MCF 10A (cell line): ENCODE measurements at regions of chr2 and their contacts with region 1.

Region 1: DNA sequence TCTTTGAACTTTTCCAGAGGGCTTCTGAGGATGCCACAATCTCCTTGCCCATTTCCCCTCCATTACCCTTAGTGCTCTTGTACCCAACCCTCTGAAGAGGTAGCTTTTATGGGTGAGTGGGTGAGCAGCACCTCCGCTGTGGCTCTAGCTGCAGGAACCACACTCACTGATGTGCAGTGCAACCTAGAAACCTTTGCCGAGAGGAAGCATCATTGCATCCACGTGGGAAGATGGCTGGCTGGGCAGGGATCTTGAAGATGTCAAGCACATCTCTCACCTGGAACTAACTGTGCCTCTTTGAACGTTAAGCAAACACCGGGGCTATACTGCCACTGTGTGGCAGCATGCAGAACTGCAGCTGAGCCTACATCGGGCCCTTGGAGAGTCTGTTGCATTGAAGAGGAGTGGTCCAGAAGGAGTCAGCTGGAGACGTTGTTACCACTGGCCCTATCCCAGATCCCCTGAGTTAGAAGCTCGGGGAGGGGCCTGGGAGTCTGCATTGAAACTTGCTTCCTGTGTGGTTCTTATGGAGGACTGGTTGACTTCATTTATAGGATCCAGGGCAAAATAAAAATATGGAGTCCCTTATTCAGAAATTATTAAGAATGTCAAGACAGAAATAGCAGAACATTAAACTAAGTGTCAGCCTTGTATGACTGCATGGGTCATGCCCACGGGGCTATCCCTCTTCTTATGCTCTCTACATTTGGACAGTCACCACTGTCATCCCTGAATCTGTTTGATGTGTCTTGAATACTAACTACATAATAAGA is 28.7 kb downstream of the IGFBP5 start:
- DNase-seq: peak; percentile 79
- H3K4me3 Mint-ChIP-seq: no peak overlapping the region
- H3K27ac Mint-ChIP-seq: no peak overlapping the region
- H3K4me1 Mint-ChIP-seq: peaks cover 15% of the 10 kb centered on the region
- H3K27me3 Mint-ChIP-seq: peaks cover 19% of the 10 kb centered on the region
- CTCF ChIP-seq: peak; percentile 97

Region 2: GRCh38 chr2:216222650-216223352 is 443.8 kb before region 1 on chr2:
- CTCF ChIA-PET with region 1: interaction called, 5 read pairs
- POLR2A ChIA-PET with region 1: no interaction called
- intact Hi-C with region 1: loop called (anchors 5 kb)
- DNase-seq: peak; percentile 30
- H3K4me3 Mint-ChIP-seq: no peak overlapping the region
- H3K27ac Mint-ChIP-seq: no peak overlapping the region
- H3K4me1 Mint-ChIP-seq: peaks cover 31% of the 10 kb centered on the region
- H3K27me3 Mint-ChIP-seq: no peaks in the 10 kb centered on the region
- CTCF ChIP-seq: peak; percentile 31

Region 3: DNA sequence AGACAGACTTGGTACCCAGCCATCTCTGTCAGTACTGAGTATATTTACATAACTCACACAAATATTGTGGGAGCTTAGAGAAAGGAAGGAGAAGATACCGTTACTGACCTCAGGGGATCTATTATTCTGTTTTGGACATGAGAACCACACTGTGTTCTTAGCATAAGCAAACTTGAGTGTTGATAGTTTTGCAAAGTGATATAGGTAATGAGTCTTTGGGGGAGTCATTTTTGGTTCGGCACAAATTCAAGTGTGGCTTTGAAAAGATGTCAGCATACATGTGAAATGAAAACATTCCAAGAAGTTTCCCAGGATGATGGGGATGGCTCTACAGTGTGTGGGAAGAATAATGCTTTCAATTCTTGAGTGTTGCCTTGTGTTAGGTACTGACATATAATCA is 230.3 kb before region 1 on chr2:
- CTCF ChIA-PET with region 1: no interaction called
- POLR2A ChIA-PET with region 1: no interaction called
- intact Hi-C with region 1: no loop called
- DNase-seq: no peak
- H3K4me3 Mint-ChIP-seq: no peak overlapping the region
- H3K27ac Mint-ChIP-seq: no peak overlapping the region
- H3K4me1 Mint-ChIP-seq: no peaks in the 10 kb centered on the region
- H3K27me3 Mint-ChIP-seq: no peaks in the 10 kb centered on the region
- CTCF ChIP-seq: no peak

Region 4: DNA sequence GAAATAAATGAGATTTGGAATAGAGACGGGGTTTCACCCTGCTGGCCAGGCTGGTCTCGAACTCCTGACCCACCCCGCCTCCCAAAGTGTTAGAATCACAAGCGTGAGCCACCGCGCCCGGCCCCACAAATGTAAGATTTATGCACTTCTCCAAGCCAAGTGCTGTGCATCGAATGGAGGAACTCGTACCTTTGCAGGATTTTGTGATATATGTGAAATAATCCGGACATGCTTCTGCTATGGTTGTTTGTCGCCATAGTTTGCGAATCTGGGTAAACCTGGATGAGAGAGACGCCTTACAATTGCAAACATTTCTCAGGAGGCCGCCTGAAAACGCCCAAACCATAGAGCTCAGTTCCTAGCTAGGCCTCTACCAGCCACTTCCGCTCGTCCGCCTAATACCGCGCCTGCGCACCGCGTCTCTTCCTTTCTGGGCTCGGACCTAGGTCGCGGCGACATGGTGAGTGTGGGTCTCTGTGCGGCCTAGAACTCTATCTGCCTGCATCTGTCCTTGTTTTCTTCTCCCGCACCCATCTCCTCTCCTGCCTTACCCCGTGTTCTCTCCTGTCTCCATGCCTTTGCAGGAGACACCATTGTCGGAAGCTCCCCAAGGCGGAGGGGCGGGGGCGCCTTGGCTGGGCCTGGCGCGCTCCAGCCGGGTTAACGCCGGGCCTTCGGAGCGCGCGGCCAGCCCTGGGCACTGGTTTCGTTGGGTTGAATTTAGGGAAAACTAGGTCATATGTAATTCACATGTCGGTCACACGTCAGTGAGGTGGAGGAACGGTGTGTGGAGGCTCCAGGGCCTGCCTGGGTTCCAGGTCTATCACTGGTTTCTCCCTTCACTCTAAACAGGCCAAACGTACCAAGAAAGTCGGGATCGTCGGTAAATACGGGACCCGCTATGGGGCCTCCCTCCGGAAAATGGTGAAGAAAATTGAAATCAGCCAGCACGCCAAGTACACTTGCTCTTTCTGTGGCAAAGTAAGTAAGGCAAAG is 167.9 kb before region 1 on chr2 and contains the start of gene RPL37A:
- CTCF ChIA-PET with region 1: interaction called, 4 read pairs
- POLR2A ChIA-PET with region 1: interaction called, 10 read pairs
- intact Hi-C with region 1: no loop called
- DNase-seq: peak; percentile 97
- H3K4me3 Mint-ChIP-seq: peak within 1 kb of the TSS; percentile 97
- H3K27ac Mint-ChIP-seq: peak within 1 kb of the TSS; percentile 99
- H3K4me1 Mint-ChIP-seq: peaks cover 28% of the 10 kb centered on the region
- H3K27me3 Mint-ChIP-seq: no peaks in the 10 kb centered on the region
- CTCF ChIP-seq: no peak
- total RNA-seq, gene RPL37A: 4,349 and 4,745 TPM in 2 replicates

Region 5: DNA sequence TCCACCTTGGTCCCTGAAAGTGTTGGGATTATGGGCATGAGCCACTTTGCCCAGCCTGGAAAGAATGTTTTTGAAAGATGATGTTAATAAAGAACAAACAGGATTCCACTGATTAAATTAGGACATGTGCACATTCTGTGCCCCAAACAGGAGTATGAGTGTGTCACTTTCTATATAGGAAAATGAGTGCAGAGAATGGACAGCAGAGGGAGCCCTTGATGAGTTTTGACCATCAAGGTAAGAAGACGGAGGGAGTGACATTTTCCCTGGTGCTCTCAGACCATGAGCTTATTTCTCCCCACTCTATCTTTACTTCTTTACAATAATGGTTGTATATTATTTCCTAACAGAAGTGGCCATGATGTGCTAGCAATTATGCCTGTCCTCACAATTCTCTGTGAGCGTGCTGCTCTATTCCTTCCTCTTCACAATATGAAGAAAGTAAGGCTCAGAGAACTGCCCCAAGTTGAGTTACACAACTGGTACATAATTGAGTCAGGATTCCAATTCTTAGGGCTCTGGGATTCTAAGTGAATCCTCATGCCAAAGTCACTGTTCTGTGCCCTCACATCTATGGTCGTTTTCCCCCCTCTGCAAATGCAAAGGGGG is 147.4 kb before region 1 on chr2:
- CTCF ChIA-PET with region 1: interaction called, 673 read pairs
- POLR2A ChIA-PET with region 1: interaction called, 34 read pairs
- intact Hi-C with region 1: loop called (anchors 1 kb)
- DNase-seq: peak; percentile 82
- H3K4me3 Mint-ChIP-seq: no peak overlapping the region
- H3K27ac Mint-ChIP-seq: no peak overlapping the region
- H3K4me1 Mint-ChIP-seq: peaks cover 6% of the 10 kb centered on the region
- H3K27me3 Mint-ChIP-seq: no peaks in the 10 kb centered on the region
- CTCF ChIP-seq: peak; percentile 62

Region 6: DNA sequence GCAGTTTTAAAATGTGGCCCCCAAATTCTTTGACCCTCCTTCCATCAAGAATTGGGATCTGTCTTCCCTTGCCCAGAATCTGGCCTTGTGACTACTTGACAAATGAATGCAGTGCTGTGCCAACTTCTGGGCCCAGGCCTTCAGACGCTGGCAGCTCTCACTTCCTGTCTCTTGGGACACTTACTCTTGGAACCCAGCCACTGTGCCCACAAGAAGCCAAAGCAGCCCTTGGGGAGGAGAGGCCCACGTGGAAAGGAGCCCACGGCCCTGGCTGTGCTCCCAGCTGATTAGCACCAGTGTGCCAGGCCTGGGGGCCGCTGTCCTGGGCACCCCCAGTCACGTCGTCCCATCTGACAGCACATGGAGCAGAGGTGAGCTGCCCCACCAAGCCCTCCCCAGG is 111.4 kb before region 1 on chr2:
- CTCF ChIA-PET with region 1: interaction called, 13 read pairs
- POLR2A ChIA-PET with region 1: interaction called, 11 read pairs
- intact Hi-C with region 1: no loop called
- DNase-seq: peak; percentile 92
- H3K4me3 Mint-ChIP-seq: peak overlapping the region; percentile 24
- H3K27ac Mint-ChIP-seq: peak overlapping the region; percentile 94
- H3K4me1 Mint-ChIP-seq: peaks cover 34% of the 10 kb centered on the region
- H3K27me3 Mint-ChIP-seq: no peaks in the 10 kb centered on the region
- CTCF ChIP-seq: no peak

Region 7: DNA sequence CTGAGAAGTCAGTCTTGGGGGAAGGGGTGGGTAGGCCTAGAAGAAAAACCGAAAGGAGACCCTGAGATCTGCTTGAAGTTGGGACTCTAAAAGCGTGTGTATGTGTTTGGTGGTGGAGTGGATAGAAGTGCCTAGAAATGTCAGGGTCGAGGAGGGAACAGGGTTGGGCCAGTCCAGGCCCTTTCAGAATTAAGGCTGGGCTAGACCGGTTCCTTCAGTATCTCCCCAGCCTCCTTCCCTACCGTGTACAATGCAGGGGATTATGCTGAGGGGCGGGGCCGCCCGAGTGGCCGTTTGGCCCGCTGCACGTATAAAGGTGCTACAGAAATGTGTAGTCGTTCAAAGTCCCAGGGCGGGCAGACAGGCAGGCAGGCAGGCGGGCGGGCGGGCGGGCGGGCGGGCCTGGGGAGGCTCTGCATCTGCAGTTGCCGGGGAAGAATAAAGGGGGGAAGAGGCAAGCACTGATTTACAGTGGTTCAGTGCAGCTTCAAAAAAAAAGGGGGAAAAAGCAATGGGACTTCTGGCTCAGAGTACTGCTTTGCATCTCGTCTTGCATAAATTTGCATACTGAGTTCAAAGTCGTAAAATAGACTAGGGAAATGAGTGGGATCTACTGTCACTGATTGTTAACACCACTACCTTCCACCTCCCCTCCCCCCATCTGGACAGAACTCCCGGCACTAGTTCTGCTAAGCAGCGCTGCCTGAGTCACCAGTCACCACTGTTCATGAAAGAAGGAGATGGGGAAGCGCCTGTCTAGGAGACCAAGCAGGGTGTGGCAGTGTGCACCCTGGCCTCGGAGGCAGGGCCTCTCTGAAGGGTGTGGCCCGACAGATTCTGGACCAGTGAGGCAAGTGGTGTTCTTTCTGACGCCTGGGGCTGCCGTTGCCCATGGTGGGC is 29.8 kb before region 1 on chr2:
- CTCF ChIA-PET with region 1: interaction called, 3 read pairs
- POLR2A ChIA-PET with region 1: no interaction called
- intact Hi-C with region 1: loop called (anchors 1 kb)
- DNase-seq: peak; percentile 78
- H3K4me3 Mint-ChIP-seq: no peak overlapping the region
- H3K27ac Mint-ChIP-seq: no peak overlapping the region
- H3K4me1 Mint-ChIP-seq: peaks cover 15% of the 10 kb centered on the region
- H3K27me3 Mint-ChIP-seq: peaks cover 43% of the 10 kb centered on the region
- CTCF ChIP-seq: no peak

Region 8: GRCh38 chr2:216683846-216684507 is 17.3 kb after region 1 on chr2:
- CTCF ChIA-PET with region 1: interaction called, 37 read pairs
- POLR2A ChIA-PET with region 1: interaction called, 4 read pairs
- intact Hi-C with region 1: no loop called
- DNase-seq: peak; percentile 99
- H3K4me3 Mint-ChIP-seq: no peak overlapping the region
- H3K27ac Mint-ChIP-seq: peak overlapping the region; percentile 93
- H3K4me1 Mint-ChIP-seq: peaks cover 32% of the 10 kb centered on the region
- H3K27me3 Mint-ChIP-seq: no peaks in the 10 kb centered on the region
- CTCF ChIP-seq: no peak